ENCODE measurements at regions of chr1 and their contacts with region 1.

Region 1: DNA sequence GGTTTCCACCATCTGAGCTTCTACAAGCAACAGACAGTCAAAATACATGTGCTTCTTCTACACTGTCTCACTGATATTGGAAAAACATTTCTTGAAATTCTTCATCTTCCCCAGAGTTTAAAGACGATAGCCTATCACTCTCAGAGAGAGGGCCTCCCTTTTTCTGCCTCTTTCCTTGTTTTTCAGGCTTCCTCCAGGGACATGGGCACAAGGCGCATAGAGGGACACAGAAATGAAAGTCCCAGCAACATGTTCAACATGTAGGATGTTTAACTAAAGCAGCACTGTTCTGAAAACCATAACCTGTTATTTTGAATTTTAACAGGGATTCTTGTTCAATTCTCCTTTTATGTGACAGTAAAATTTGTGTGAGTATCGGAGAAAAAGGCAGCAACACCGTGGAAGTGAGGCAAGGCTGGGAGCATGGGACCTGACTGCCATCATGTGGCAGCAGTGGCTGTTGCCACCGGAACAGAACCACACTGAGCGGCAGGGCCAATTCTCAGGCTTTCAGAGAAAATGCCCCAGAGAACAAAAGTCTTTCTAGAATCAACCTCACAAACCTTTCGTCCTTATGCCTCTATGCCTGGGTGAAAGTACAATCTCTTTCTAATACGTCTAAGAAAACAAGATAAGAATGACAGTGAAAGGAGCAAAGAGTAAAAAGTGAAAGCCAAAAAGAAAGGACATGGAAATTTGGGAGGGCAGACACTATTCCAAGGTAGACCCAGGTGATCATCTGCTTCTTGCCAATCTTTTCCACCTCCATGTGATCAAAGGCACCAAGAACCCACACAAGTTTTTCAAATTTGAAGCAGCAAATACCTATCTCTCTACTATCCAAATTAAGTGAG is 54.5 kb downstream of the PCNX2 start:
- DNase-seq: peak; percentile 36
- ATAC-seq: peak; percentile 96
- H3K4me3 ChIP-seq: 0 out of 4 replicates have a peak overlapping the region, but pooled peaks of 1 of the 2 experiments have one; percentile 6
- H3K27ac ChIP-seq: no peak overlapping the region
- H3K4me1 ChIP-seq: no peaks in the 10 kb centered on the region
- H3K27me3 ChIP-seq: no peaks in the 10 kb centered on the region
- CTCF ChIP-seq: peak; percentile 91

Region 2: DNA sequence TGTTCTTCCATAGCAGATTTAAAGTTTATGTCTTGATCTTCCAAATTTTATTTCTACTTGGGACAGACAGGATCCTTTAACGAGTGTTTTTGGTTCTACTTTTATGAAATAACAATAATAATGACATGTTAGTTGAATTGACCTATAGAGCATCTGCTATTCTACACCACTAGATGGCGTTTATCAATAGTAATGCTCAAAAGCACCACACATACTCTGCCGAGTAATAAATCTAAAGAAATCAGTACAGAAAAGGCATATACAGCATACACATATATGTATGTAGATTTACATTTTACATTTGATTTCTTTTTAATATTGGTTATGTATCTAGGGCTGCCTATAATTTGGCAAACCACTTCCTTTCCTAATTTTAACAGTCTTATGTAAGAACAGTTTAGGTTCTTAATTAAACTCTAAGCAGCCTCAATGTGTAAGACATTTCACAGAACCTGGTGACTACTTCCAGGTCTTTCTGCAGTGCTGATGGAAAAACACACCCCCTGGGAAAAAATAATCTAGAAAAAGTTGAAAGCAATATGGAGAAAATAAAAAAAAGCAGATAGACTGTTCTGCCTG is 605.2 kb before region 1 on chr1:
- CTCF ChIA-PET with region 1: no interaction called
- POLR2A ChIA-PET with region 1: no interaction called
- in situ Hi-C with region 1: no loop called
- intact Hi-C with region 1: loop called (anchors 1 kb)
- DNase-seq: no peak
- ATAC-seq: peak; percentile 94
- H3K4me3 ChIP-seq: no peak overlapping the region
- H3K27ac ChIP-seq: no peak overlapping the region
- H3K4me1 ChIP-seq: no peaks in the 10 kb centered on the region; the same call in 1 of the 2 replicates
- H3K27me3 ChIP-seq: peaks cover 10% of the 10 kb centered on the region
- CTCF ChIP-seq: peak; percentile 70; the same call in 1 of the 2 replicates

Region 3: GRCh38 chr1:232844791-232845190 is 396.3 kb before region 1 on chr1:
- CTCF ChIA-PET with region 1: no interaction called
- POLR2A ChIA-PET with region 1: no interaction called
- in situ Hi-C with region 1: no loop called
- intact Hi-C with region 1: loop called (anchors 5 kb)
- DNase-seq: no peak
- ATAC-seq: no peak
- H3K4me3 ChIP-seq: no peak overlapping the region
- H3K27ac ChIP-seq: no peak overlapping the region
- H3K4me1 ChIP-seq: no peaks in the 10 kb centered on the region
- H3K27me3 ChIP-seq: no peaks in the 10 kb centered on the region
- CTCF ChIP-seq: no peak

Region 4: DNA sequence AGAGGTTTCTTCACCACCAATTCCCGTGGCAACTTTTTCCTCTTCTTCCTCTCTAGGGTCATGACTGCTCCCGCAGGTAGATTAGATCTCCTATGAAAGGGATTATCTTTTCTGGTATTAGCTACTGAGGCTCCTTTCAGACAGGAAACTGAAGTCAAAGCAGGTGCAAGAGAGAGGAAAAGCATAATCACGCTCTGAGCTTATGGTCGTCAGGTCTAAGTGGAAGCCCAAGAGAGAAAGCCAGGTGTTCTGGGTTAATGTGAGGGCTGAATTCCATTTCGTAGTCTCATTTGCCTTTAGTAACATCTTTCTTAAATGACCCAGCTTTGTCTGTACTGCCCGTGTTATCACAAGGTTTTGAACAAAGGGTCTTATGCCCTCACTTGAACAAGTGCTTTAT is 78.2 kb after region 1 on chr1:
- CTCF ChIA-PET with region 1: no interaction called
- POLR2A ChIA-PET with region 1: no interaction called
- in situ Hi-C with region 1: no loop called
- intact Hi-C with region 1: no loop called
- DNase-seq: no peak
- ATAC-seq: no peak
- H3K4me3 ChIP-seq: no peak overlapping the region
- H3K27ac ChIP-seq: no peak overlapping the region
- H3K4me1 ChIP-seq: no peaks in the 10 kb centered on the region
- H3K27me3 ChIP-seq: peaks cover 24% of the 10 kb centered on the region
- CTCF ChIP-seq: no peak